ENCODE measurements at regions of chr3 and their contacts with region 1.

Region 1: DNA sequence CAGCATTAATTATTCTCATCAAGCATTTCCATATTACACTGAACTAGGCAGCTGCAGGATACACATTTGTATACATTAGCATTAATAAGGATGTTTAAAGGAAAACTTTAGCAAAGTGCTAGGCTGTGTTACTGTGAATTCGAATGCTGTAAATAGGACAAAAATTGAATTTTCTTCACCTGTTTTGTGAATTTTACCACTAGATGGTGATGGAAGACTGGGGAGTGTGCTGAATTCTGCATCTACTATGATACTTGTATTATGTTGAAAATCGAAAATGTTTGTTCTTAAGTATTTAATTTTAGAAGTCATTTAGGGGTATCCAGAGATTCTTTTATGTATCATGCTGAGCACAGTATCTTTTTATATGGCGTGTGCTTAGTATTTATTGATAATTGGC is 12.3 kb upstream of the P2RY14 start:
- DNase-seq: no peak
- ATAC-seq: no peak
- H3K4me3 Mint-ChIP-seq: no peak overlapping the region
- H3K27ac Mint-ChIP-seq: no peak overlapping the region
- H3K4me1 Mint-ChIP-seq: peaks cover 4% of the 10 kb centered on the region
- H3K27me3 Mint-ChIP-seq: no peaks in the 10 kb centered on the region

Region 2: DNA sequence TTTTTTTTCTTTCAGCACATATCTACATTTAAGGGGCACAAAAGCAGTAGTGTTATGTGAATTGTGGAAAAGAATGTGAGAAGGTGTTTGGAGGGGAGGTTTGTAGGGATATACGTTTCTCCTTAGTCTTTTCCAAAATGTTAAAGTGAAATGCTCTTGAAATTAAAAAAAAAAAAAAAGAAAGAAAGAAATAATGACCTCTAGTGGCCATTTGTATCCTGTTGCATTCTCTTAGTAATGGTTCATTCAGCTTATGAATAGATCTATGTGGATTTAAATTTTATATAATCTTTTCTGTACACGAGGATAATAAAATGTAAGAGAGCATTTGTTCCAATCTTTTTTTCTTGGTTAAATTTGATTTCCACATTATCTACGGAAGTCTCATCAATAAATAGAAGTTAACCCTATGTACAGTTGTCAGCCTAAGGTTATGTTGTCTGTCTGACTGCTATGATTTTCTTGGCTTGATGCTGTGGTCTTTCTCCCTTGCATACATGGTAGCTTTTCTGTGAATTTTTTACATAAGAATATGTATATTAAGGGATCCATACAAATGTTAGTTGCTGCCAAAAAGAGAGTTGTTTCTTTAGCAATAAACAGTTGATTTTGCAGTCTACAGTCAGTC is 37.0 kb after region 1 on chr3:
- CTCF ChIA-PET with region 1: interaction called, 25 read pairs
- POLR2A ChIA-PET with region 1: no interaction called
- intact Hi-C with region 1: loop called (anchors 1 kb)
- DNase-seq: no peak
- ATAC-seq: peak; percentile 17
- H3K4me3 Mint-ChIP-seq: no peak overlapping the region
- H3K27ac Mint-ChIP-seq: no peak overlapping the region
- H3K4me1 Mint-ChIP-seq: peaks cover 25% of the 10 kb centered on the region
- H3K27me3 Mint-ChIP-seq: peaks cover 10% of the 10 kb centered on the region

Region 3: GRCh38 chr3:151439652-151440129 is 149.0 kb after region 1 on chr3:
- CTCF ChIA-PET with region 1: no interaction called
- POLR2A ChIA-PET with region 1: no interaction called
- intact Hi-C with region 1: loop called in 1 of 2 experiments (anchors 5 kb)
- DNase-seq: no peak
- ATAC-seq: peak; percentile 58
- H3K4me3 Mint-ChIP-seq: no peak overlapping the region
- H3K27ac Mint-ChIP-seq: no peak overlapping the region
- H3K4me1 Mint-ChIP-seq: no peaks in the 10 kb centered on the region
- H3K27me3 Mint-ChIP-seq: no peaks in the 10 kb centered on the region